ENCODE measurements at regions of chr12 and their contacts with region 1.

Region 1: DNA sequence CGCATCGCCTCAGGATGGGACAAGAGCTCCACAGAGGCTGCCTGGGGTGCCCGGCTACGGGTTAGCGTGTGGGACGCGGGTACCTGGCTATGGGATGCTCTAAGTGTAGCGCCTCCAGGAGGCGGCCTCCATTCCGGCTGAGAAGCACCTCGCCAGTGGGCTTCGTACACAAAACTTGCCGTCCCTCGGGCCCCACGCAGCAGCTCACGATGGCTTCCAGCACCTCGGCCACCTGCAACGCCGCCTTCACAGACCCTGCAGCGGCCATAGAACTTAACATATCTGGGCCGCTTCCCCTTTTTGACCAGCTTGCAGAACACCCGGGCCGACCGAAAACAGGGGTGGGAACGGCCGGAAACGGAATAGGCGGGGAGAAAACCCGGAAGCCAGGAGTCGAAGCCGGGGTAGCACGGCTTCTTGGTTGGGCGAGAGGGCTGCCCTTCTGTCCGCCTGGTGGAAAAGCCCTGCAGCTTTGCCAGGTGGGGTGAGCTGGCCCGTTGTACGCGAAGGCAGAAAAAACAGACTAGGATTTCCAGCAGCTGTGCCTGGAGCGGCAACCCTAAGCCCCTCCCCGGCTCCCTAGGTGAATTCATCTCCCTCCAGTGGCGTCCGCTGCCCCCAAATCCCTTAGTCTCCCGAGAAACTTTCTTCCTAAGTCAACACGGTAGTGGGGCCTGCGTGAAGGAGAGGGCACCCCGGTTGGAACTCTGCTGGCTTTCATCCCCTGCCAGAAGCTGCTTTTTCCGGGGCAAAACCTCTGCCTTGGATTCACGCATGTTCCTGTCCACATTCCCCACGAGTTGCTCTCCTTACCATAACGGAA is at the start of gene BBS10:
- DNase-seq: peak; percentile 70
- ATAC-seq: peak; percentile 99
- H3K4me3 ChIP-seq: peak within 1 kb of the TSS; percentile 84
- H3K27ac ChIP-seq: peak within 1 kb of the TSS; percentile 83
- H3K4me1 ChIP-seq: peaks cover 7% of the 10 kb centered on the region; the same call in 1 of the 2 replicates
- H3K27me3 ChIP-seq: no peaks in the 10 kb centered on the region
- CTCF ChIP-seq: peak in 2 of 3 experiments; percentile 22 to 39; a peak in 3 of 6 replicates
- EP300 ChIP-seq: no peak
- POLR2A ChIP-seq: peak; percentile 93
- RAD21 ChIP-seq: 0 out of 2 replicates have a peak, but pooled peaks have one; percentile 7
- polyA plus RNA-seq, gene BBS10: 1.2 to 1.5 TPM

Region 2: GRCh38 chr12:75511116-75512048 is 836.9 kb before region 1 on chr12 and contains the start of gene KRR1:
- CTCF ChIA-PET with region 1: interaction called, 7 read pairs
- POLR2A ChIA-PET with region 1: no interaction called
- RAD21 ChIA-PET with region 1: interaction called, 8 read pairs
- SMC1A ChIA-PET with region 1: interaction called, 3 read pairs
- in situ Hi-C with region 1: no loop called
- intact Hi-C with region 1: loop called (anchors 5 kb)
- DNase-seq: peak; percentile 89
- ATAC-seq: peak; percentile 93
- H3K4me3 ChIP-seq: peak within 1 kb of the TSS; percentile 76
- H3K27ac ChIP-seq: peak within 1 kb of the TSS; percentile 85
- H3K4me1 ChIP-seq: no peaks in the 10 kb centered on the region; the same call in 1 of the 2 replicates
- H3K27me3 ChIP-seq: no peaks in the 10 kb centered on the region
- CTCF ChIP-seq: no peak
- EP300 ChIP-seq: no peak
- POLR2A ChIP-seq: peak; percentile 77
- RAD21 ChIP-seq: no peak
- polyA plus RNA-seq, gene KRR1: 74.4 to 81.0 TPM

Region 3: GRCh38 chr12:76074701-76075336 is 273.5 kb before region 1 on chr12:
- CTCF ChIA-PET with region 1: interaction called, 3 read pairs
- POLR2A ChIA-PET with region 1: interaction called, 3 read pairs
- RAD21 ChIA-PET with region 1: interaction called, 6 read pairs
- SMC1A ChIA-PET with region 1: interaction called, 13 read pairs
- in situ Hi-C with region 1: loop called (anchors 5 kb)
- intact Hi-C with region 1: no loop called
- DNase-seq: no peak
- ATAC-seq: peak; percentile 44
- H3K4me3 ChIP-seq: peak overlapping the region; percentile 13; the same call in 1 of the 2 replicates
- H3K27ac ChIP-seq: no peak overlapping the region
- H3K4me1 ChIP-seq: peaks cover 4% of the 10 kb centered on the region; the same call in 1 of the 2 replicates
- H3K27me3 ChIP-seq: no peaks in the 10 kb centered on the region
- CTCF ChIP-seq: no peak
- EP300 ChIP-seq: no peak
- POLR2A ChIP-seq: no peak
- RAD21 ChIP-seq: no peak

Region 4: GRCh38 chr12:76176940-76177339 is 171.3 kb before region 1 on chr12:
- CTCF ChIA-PET with region 1: no interaction called
- POLR2A ChIA-PET with region 1: no interaction called
- RAD21 ChIA-PET with region 1: no interaction called
- SMC1A ChIA-PET with region 1: no interaction called
- in situ Hi-C with region 1: no loop called
- intact Hi-C with region 1: loop called (anchors 5 kb)
- DNase-seq: no peak
- ATAC-seq: no peak
- H3K4me3 ChIP-seq: no peak overlapping the region
- H3K27ac ChIP-seq: no peak overlapping the region
- H3K4me1 ChIP-seq: peaks cover 15% of the 10 kb centered on the region
- H3K27me3 ChIP-seq: no peaks in the 10 kb centered on the region
- CTCF ChIP-seq: no peak
- EP300 ChIP-seq: no peak
- POLR2A ChIP-seq: no peak
- RAD21 ChIP-seq: no peak

Region 5: GRCh38 chr12:76374386-76375020 is 26.2 kb after region 1 on chr12:
- CTCF ChIA-PET with region 1: no interaction called
- POLR2A ChIA-PET with region 1: no interaction called
- RAD21 ChIA-PET with region 1: no interaction called
- SMC1A ChIA-PET with region 1: no interaction called
- in situ Hi-C with region 1: no loop called
- intact Hi-C with region 1: no loop called
- DNase-seq: no peak
- ATAC-seq: no peak
- H3K4me3 ChIP-seq: no peak overlapping the region
- H3K27ac ChIP-seq: no peak overlapping the region
- H3K4me1 ChIP-seq: no peaks in the 10 kb centered on the region
- H3K27me3 ChIP-seq: no peaks in the 10 kb centered on the region
- CTCF ChIP-seq: no peak
- EP300 ChIP-seq: no peak
- POLR2A ChIP-seq: no peak
- RAD21 ChIP-seq: no peak

Region 6: DNA sequence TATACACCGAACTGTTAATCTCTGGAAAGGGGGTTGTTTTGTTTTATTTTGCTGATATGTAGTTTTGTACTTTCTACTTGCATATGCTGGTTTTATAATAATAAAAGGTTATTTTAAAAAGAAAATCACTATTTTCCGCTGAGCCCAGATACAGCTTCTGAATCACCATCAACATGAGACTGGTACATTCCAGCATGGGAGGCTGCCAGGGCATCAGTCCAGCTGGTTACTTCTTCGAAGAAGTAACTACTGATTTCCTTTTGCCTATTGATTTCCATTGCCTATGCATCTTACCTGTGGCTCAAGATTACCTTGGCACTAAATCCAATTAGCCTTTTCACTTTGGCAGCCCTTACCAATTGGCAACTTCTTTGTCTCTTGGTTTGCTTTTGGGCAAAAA is 223.0 kb after region 1 on chr12:
- CTCF ChIA-PET with region 1: no interaction called
- POLR2A ChIA-PET with region 1: no interaction called
- RAD21 ChIA-PET with region 1: no interaction called
- SMC1A ChIA-PET with region 1: no interaction called
- in situ Hi-C with region 1: no loop called
- intact Hi-C with region 1: no loop called
- DNase-seq: no peak
- ATAC-seq: no peak
- H3K4me3 ChIP-seq: no peak overlapping the region
- H3K27ac ChIP-seq: no peak overlapping the region
- H3K4me1 ChIP-seq: no peaks in the 10 kb centered on the region
- H3K27me3 ChIP-seq: no peaks in the 10 kb centered on the region
- CTCF ChIP-seq: no peak
- EP300 ChIP-seq: no peak
- POLR2A ChIP-seq: no peak
- RAD21 ChIP-seq: no peak

Region 7: GRCh38 chr12:76586764-76587395 is 238.6 kb after region 1 on chr12:
- CTCF ChIA-PET with region 1: interaction called, 8 read pairs
- POLR2A ChIA-PET with region 1: no interaction called
- RAD21 ChIA-PET with region 1: interaction called, 13 read pairs
- SMC1A ChIA-PET with region 1: interaction called, 17 read pairs
- in situ Hi-C with region 1: no loop called
- intact Hi-C with region 1: loop called (anchors 2 kb)
- DNase-seq: no peak
- ATAC-seq: peak; percentile 82
- H3K4me3 ChIP-seq: no peak overlapping the region
- H3K27ac ChIP-seq: no peak overlapping the region
- H3K4me1 ChIP-seq: no peaks in the 10 kb centered on the region
- H3K27me3 ChIP-seq: no peaks in the 10 kb centered on the region
- CTCF ChIP-seq: peak; percentile 54 to 69 (median 68); a peak in 5 of 6 replicates
- EP300 ChIP-seq: no peak
- POLR2A ChIP-seq: no peak
- RAD21 ChIP-seq: peak; percentile 85